ENCODE measurements at regions of chr22 and their contacts with region 1.

Region 1: GRCh38 chr22:47452184-47452583 is 689.7 kb downstream of the TBC1D22A start:
- DNase-seq: no peak
- H3K4me3 ChIP-seq: no peak overlapping the region
- CTCF ChIP-seq: no peak
- POLR2A ChIP-seq: no peak

Region 2: GRCh38 chr22:47107431-47107830 is 344.8 kb before region 1 on chr22:
- intact Hi-C with region 1: no loop called
- DNase-seq: no peak
- H3K4me3 ChIP-seq: no peak overlapping the region
- CTCF ChIP-seq: no peak
- POLR2A ChIP-seq: no peak

Region 3: DNA sequence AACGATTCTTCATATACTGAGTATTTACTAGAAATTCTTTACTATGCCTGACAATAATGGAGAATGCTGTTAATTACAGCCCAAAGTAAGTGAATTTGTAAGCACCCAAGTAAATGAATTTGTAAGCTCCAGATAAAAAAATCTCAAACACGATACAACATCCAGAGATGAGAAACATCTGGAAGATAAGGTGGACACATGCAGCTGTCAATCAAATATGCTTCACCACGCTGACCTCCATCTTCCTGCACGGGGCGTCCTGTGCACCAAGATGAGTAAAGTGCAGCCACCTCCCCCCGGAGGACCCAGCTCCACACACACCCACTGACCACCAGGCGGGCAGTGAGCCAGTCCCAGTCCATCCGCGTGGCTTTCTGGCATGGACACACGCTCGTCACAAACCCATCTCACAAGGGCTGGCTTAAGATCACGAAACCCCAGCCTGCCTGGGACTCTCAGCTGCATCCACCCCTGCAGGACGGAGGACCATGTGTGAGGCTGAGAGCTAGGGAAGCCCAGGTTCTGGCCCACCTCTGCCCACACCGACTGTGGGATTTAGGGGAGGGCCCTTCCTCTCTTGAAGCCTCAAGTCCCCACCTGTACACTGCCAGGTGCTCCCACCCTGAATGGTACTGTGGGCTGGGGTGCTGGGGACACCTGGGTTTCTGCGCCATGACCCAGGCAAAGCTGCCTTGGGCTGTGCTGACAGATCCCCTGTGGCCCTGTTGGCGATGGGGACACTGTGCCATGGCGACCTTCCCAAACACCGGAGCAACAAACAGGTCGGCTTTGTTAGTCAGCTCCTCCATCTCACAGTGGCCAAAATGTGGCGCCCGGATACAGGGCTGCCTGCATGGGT is 60.9 kb before region 1 on chr22:
- intact Hi-C with region 1: loop called (anchors 2 kb)
- DNase-seq: no peak
- H3K4me3 ChIP-seq: no peak overlapping the region
- CTCF ChIP-seq: no peak
- POLR2A ChIP-seq: no peak

Region 4: DNA sequence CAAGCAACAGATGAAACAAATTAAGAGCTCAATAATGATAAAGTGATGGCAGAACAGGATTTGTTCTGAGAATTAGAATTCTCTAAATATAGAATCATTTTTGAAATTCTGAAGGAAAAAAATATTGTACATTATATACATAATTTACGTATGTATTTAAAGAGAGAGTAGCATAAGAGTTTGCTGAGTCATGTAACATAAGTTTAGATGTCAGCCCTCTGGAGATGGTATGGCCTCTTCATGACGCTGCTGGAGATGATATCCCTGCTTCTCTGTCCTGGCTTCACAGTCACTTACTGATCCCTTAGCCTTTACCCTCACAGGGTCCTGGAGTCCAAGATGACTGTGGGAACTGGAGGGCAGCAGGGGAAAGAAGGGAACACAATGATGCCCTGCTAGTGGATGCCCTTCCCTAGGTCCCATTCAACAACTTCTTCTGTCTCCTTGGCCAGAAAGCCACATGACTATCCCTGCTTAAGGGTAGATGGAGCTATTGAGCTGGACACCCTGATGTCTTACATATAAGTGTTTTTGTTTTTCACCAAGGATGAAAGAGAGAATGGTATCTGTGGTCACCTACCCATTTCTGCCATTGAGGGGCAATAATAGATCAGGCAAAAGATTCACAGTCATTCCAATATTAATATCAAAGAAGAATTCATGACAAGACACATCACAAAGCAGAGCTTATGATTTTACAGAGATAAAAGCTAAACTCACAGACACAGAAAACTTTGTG is 63.4 kb after region 1 on chr22:
- intact Hi-C with region 1: no loop called
- DNase-seq: no peak
- H3K4me3 ChIP-seq: no peak overlapping the region
- CTCF ChIP-seq: no peak
- POLR2A ChIP-seq: no peak

Region 5: GRCh38 chr22:49149721-49150608 is 1697.8 kb after region 1 on chr22:
- intact Hi-C with region 1: loop called (anchors 10 kb)
- DNase-seq: peak in 1 of 2 donors; percentile 78
- H3K4me3 ChIP-seq: no peak overlapping the region
- CTCF ChIP-seq: no peak
- POLR2A ChIP-seq: no peak